Activated CD4-positive, alpha-beta T cell treated with anti-CD3 and anti-CD28 coated beads for 36 hours (primary cell): ENCODE measurements at regions of chr10 and their contacts with region 1.

Region 1: DNA sequence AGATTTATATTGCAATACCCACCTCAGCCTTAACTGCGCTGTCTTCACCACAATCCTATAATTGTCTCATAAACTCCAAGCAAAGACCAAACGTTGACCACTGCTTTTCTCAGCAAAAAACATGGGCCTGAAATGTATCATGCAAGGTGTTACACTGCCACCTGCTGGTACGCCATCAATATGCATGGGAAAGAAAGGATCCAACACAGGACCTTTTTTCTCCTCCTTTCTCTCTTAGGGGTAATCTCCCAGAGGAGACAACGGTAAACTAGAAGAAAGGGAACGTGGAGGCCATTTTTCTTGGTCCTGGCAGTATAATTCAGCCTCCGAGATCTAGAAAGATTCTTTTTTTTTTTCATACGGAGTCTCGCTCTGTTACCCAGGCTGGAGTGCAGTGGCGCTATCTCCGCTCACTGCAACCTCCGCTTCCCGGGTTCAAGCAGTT is 79.1 kb upstream of the MPP7 start:
- DNase-seq: peak; percentile 91
- ATAC-seq: peak; percentile 81
- H3K4me3 Mint-ChIP-seq: no peak overlapping the region
- H3K27ac Mint-ChIP-seq: no peak overlapping the region
- H3K4me1 Mint-ChIP-seq: peaks cover 29% of the 10 kb centered on the region
- H3K27me3 Mint-ChIP-seq: peaks cover 2% of the 10 kb centered on the region

Region 2: DNA sequence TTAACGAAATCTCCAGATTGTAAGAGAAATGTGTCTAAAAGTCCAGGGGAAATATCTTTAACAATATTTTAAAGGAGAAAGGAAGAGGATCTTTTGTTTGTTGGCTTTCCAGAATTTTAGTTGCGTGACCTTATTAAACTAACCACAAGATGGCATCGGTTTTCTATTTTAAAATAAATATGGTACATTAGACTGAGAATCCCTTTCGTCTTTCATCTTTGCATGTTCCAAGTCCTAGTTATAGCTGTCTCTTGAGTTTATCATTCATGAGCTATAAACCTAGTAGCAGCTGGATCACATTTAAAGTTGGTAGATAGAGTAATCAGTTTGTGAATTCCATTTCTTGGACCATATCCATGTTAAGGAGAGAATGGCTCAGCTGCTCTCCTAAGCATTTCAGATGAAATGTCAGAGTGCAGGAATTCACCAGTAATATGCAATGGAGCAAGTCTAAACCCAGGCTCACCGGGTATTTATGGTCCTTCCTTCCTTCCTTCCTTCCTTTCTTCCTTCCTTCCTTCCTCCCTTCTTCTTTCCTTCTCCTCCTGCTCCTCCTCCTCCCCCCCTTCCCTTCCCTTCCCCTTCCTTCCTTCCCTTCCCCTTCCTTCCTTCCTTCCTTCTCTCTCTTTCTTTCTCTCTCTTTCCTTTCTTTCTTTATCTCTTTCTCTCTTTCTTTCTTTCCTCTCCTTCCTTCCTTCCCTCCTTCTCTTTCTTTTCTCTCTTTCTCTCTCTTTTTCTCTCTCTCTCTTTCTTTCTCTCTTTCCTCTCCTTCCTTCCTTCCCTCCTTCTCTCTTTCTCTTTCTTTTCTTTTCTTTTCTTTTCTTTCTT is 935.6 kb before region 1 on chr10:
- CTCF ChIA-PET with region 1: no interaction called
- POLR2A ChIA-PET with region 1: no interaction called
- intact Hi-C with region 1: loop called in 1 of 2 experiments (anchors 1 kb)
- DNase-seq: no peak
- ATAC-seq: no peak
- H3K4me3 Mint-ChIP-seq: no peak overlapping the region
- H3K27ac Mint-ChIP-seq: no peak overlapping the region
- H3K4me1 Mint-ChIP-seq: peaks cover 4% of the 10 kb centered on the region
- H3K27me3 Mint-ChIP-seq: no peaks in the 10 kb centered on the region

Region 3: DNA sequence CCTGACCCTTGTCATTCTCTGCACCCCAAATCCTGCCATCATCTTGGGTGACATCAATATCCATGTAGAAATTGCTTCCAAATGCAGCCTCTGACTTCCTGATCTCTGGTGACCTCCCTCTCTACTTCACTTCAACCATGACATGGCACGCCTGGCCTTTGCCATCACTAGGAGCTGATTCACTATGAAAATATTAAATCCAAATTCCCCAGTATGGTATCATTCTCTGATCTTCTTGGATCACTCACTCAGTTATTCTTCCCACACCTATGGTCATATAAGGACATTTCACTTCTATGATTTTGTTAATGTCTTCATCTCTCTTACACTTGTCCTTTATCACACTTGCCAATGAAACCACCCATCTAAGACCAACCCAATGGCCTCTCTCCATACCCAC is 309.4 kb before region 1 on chr10:
- CTCF ChIA-PET with region 1: no interaction called
- POLR2A ChIA-PET with region 1: no interaction called
- intact Hi-C with region 1: no loop called
- DNase-seq: no peak
- ATAC-seq: no peak
- H3K4me3 Mint-ChIP-seq: no peak overlapping the region
- H3K27ac Mint-ChIP-seq: no peak overlapping the region
- H3K4me1 Mint-ChIP-seq: peaks cover 1% of the 10 kb centered on the region
- H3K27me3 Mint-ChIP-seq: no peaks in the 10 kb centered on the region

Region 4: GRCh38 chr10:28087661-28088351 is 294.1 kb before region 1 on chr10:
- CTCF ChIA-PET with region 1: no interaction called
- POLR2A ChIA-PET with region 1: no interaction called
- intact Hi-C with region 1: loop called in 1 of 2 experiments (anchors 5 kb)
- DNase-seq: peak; percentile 22
- ATAC-seq: peak; percentile 90
- H3K4me3 Mint-ChIP-seq: no peak overlapping the region
- H3K27ac Mint-ChIP-seq: peak overlapping the region; percentile 95
- H3K4me1 Mint-ChIP-seq: peaks cover 18% of the 10 kb centered on the region
- H3K27me3 Mint-ChIP-seq: no peaks in the 10 kb centered on the region

Region 5: DNA sequence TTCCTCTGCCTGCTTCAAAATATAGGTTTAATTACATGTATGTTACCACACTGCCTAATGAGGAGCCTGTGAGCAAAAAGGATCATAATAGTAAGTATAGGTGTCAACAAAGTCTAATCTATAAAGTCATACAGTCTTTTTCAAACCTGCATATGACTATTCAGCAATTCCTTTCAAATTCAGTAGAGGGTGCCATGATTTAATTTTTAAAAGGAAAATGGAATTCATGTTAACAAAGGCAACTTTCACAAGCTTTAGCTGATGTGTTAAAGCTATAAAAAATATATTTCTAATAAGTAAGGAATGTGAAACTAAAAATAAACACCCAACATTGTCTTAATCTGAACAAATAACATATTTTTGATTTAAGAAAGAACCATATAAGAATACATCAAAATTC is 131.1 kb before region 1 on chr10:
- CTCF ChIA-PET with region 1: interaction called, 160 read pairs
- POLR2A ChIA-PET with region 1: no interaction called
- intact Hi-C with region 1: loop called (anchors 1 kb)
- DNase-seq: no peak
- ATAC-seq: peak; percentile 47
- H3K4me3 Mint-ChIP-seq: no peak overlapping the region
- H3K27ac Mint-ChIP-seq: no peak overlapping the region
- H3K4me1 Mint-ChIP-seq: peaks cover 42% of the 10 kb centered on the region
- H3K27me3 Mint-ChIP-seq: no peaks in the 10 kb centered on the region

Region 6: DNA sequence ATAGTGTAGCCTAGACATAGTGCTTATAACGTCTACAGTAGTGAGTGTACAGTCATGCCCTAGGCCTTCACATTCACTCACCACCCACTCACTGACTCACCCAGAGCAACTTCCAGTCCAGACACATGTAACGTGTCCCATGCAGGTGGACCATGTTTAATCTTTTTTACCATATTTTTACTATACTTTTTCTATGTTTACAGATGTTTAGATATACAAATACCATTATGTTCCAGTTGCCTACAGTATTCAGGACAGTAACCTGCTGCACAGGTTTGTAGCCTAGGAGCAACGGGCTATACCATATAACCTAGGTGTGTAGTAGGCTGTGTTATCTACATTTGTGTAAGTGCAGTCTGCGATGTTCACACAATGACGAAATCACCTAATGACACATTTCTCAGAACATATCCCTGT is 90.0 kb before region 1 on chr10:
- CTCF ChIA-PET with region 1: interaction called, 11 read pairs
- POLR2A ChIA-PET with region 1: no interaction called
- intact Hi-C with region 1: loop called in 1 of 2 experiments (anchors 2 kb)
- DNase-seq: peak; percentile 80
- ATAC-seq: peak; percentile 97
- H3K4me3 Mint-ChIP-seq: no peak overlapping the region
- H3K27ac Mint-ChIP-seq: peak overlapping the region; percentile 72
- H3K4me1 Mint-ChIP-seq: peaks cover 56% of the 10 kb centered on the region
- H3K27me3 Mint-ChIP-seq: no peaks in the 10 kb centered on the region

Region 7: GRCh38 chr10:28334296-28334695 is 47.6 kb before region 1 on chr10:
- CTCF ChIA-PET with region 1: interaction called, 19 read pairs
- POLR2A ChIA-PET with region 1: interaction called, 14 read pairs
- intact Hi-C with region 1: loop called (anchors 1 kb)
- DNase-seq: peak; percentile 43
- ATAC-seq: peak; percentile 62
- H3K4me3 Mint-ChIP-seq: peak overlapping the region; percentile 79
- H3K27ac Mint-ChIP-seq: peak overlapping the region; percentile 100
- H3K4me1 Mint-ChIP-seq: peaks cover 70% of the 10 kb centered on the region
- H3K27me3 Mint-ChIP-seq: no peaks in the 10 kb centered on the region

Region 8: DNA sequence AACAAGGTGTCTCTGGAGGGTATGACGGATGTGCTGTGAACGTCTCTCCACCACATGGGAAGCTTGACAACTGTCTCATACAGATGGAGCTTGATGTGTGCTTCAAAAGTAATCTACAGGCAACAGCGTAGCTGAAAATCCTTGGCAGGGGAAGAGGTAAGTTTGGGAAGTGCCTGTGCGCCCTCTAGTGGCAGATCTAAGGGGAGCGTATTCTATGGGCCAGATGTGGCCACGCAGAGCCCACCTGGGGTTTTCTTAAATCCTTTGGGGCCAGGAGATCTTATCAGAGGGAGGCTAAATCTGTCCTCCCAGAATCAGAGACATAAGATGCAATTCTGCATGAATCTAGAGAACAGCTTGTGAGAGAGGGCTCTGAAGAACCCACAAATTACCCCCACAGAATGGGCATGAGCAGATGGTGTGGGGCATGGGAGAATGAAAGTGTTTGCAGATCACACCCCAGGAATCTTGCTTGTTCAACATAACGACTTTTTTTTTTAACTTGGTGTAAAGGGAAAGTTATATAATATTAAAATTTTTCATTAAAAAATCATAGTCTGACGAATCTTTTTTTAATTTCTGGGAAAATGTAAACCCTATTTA is 12.1 kb after region 1 on chr10:
- CTCF ChIA-PET with region 1: interaction called, 51 read pairs
- POLR2A ChIA-PET with region 1: no interaction called
- intact Hi-C with region 1: no loop called
- DNase-seq: peak; percentile 82
- ATAC-seq: peak; percentile 87
- H3K4me3 Mint-ChIP-seq: no peak overlapping the region
- H3K27ac Mint-ChIP-seq: no peak overlapping the region
- H3K4me1 Mint-ChIP-seq: peaks cover 4% of the 10 kb centered on the region
- H3K27me3 Mint-ChIP-seq: peaks cover 4% of the 10 kb centered on the region

Region 9: GRCh38 chr10:28429573-28430216 is 47.8 kb after region 1 on chr10:
- CTCF ChIA-PET with region 1: no interaction called
- POLR2A ChIA-PET with region 1: no interaction called
- intact Hi-C with region 1: no loop called
- DNase-seq: no peak
- ATAC-seq: peak; percentile 64
- H3K4me3 Mint-ChIP-seq: no peak overlapping the region
- H3K27ac Mint-ChIP-seq: no peak overlapping the region
- H3K4me1 Mint-ChIP-seq: peaks cover 6% of the 10 kb centered on the region
- H3K27me3 Mint-ChIP-seq: peaks cover 1% of the 10 kb centered on the region